ENCODE measurements at regions of chr6 and their contacts with region 1.

Region 1: GRCh38 chr6:74356385-74356784 is 660.4 kb downstream of the CD109 start:
- DNase-seq: no peak
- H3K4me3 ChIP-seq: no peak overlapping the region
- H3K27ac ChIP-seq: no peak overlapping the region
- H3K4me1 ChIP-seq: peaks cover 0 to 6% (median 0%) of the 10 kb centered on the region in 4 donors
- H3K27me3 ChIP-seq: no peaks in the 10 kb centered on the region
- CTCF ChIP-seq: no peak
- EP300 ChIP-seq: no peak
- POLR2A ChIP-seq: no peak

Region 2: DNA sequence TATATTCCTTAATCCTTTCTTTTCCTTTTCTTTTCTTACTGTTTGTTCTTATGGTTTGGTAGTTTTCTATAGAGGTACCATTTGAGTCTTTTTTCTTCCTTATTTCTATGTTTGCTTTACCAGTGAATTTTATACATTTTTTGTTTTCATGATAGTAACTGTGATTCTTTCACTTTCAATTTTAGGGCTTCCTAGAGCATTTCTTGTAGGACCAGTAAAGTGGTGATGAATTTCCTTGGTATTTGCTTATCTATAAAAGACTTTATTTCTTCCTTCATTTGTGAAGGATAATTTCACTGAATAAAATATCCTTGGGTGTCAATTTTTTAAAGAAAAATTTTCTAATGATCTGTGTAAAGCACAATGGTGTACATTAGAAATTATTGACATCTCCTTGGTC is 23.0 kb before region 1 on chr6:
- intact Hi-C with region 1: loop called (anchors 2 kb)
- DNase-seq: no peak
- H3K4me3 ChIP-seq: no peak overlapping the region
- H3K27ac ChIP-seq: no peak overlapping the region
- H3K4me1 ChIP-seq: no peaks in the 10 kb centered on the region
- H3K27me3 ChIP-seq: no peaks in the 10 kb centered on the region
- CTCF ChIP-seq: no peak
- EP300 ChIP-seq: no peak
- POLR2A ChIP-seq: no peak

Measured in sigmoid colon (tissue), 7 donors.